Activated CD8-positive, alpha-beta T cell treated with anti-CD3 and anti-CD28 coated beads, Interleukin-2, amount 10 ng/mL, durations not matched to agents 7 days and 5 days (primary cell): ENCODE measurements at regions of chr9 and their contacts with region 1.

Region 1: DNA sequence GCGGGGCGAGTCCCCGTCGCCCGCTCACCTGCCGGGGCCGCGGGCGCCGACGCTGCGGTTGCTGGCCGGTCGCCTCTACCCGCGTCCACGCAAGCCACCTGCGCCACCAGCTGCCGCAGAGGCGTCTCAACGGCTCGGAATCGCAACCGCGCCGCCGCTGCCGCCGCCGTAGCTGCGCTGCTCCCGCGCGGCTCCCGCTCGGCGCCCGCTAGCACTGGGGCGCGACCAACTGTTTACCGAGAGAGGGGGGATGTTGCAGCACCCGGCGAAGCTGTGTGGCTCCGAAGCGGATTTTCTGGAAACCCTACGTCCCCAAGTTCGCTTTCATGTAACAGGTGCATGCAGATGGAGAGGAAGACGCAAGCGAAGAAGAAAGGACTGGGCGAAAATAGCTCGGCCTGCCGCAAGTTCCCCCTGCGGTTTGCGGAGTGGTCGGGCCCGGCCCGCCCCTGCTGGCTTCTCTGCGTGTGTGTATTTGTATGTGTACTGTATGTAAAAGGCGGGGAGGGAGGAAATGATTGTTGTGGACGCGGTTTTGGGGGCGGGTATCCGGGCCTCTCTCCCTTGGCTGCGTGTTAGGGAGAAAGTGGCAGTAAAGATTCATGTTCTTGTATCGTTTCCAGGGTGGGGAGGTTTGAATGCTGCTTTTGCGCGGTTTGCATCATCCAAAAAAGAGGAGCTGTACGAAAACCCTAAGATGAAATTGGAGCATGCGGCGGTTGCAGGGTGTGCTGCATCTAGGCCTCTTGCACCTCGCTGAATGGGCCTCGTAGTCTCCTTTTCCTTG is at the start of gene PSIP1:
- DNase-seq: peak; percentile 93
- ATAC-seq: peak; percentile 88
- H3K4me3 Mint-ChIP-seq: peak within 1 kb of the TSS; percentile 89
- H3K27ac Mint-ChIP-seq: peak within 1 kb of the TSS; percentile 100
- H3K4me1 Mint-ChIP-seq: peaks cover 51% of the 10 kb centered on the region
- H3K27me3 Mint-ChIP-seq: peaks cover 7% of the 10 kb centered on the region
- total RNA-seq, gene PSIP1: 132 to 138 TPM

Region 2: GRCh38 chr9:15333376-15333881 is 177.6 kb before region 1 on chr9:
- CTCF ChIA-PET with region 1: no interaction called
- POLR2A ChIA-PET with region 1: no interaction called
- DNase-seq: no peak
- ATAC-seq: no peak
- H3K4me3 Mint-ChIP-seq: no peak overlapping the region
- H3K27ac Mint-ChIP-seq: no peak overlapping the region
- H3K4me1 Mint-ChIP-seq: no peaks in the 10 kb centered on the region
- H3K27me3 Mint-ChIP-seq: peaks cover 3% of the 10 kb centered on the region

Region 3: DNA sequence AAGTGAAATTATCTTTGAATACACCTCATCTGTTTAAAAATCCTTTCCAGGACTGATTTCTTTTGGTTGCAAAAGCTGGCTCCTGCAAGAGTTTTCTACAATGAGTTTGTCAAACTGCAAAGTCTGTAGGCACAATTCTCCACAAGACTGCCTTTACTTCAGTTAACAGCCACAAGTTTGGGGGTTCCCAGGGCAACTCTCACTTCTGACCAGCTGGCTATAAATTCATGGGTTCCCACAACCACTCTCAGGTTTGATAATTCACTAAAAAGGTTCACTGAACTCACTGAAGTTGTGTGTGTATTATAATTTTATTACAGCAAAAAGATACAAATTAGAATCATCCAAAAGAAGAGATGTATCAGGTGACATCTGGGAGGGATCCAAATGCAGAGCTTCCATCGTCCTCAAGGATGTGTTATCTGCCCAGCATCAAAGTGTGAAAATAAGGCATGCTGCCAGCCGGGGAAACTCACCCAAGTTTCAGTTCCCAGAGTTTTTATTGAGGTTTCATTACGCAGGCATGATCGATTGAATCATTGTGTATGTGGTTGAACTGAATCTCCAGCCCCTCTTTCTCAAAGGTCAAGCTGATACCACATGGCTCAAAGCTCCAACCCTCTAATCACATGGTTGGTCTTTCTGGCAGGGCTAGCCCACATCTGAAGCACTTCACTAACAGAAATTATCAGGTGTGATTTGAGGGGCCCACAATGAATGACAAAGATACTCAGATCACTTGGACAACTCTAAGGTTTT is 18.8 kb after region 1 on chr9:
- CTCF ChIA-PET with region 1: interaction called, 11 read pairs
- POLR2A ChIA-PET with region 1: interaction called, 13 read pairs
- DNase-seq: no peak
- ATAC-seq: no peak
- H3K4me3 Mint-ChIP-seq: no peak overlapping the region
- H3K27ac Mint-ChIP-seq: no peak overlapping the region
- H3K4me1 Mint-ChIP-seq: peaks cover 9% of the 10 kb centered on the region
- H3K27me3 Mint-ChIP-seq: no peaks in the 10 kb centered on the region

Region 4: GRCh38 chr9:15999422-16000339 is 488.7 kb after region 1 on chr9:
- CTCF ChIA-PET with region 1: no interaction called
- POLR2A ChIA-PET with region 1: no interaction called
- DNase-seq: no peak
- ATAC-seq: no peak
- H3K4me3 Mint-ChIP-seq: no peak overlapping the region
- H3K27ac Mint-ChIP-seq: no peak overlapping the region
- H3K4me1 Mint-ChIP-seq: no peaks in the 10 kb centered on the region
- H3K27me3 Mint-ChIP-seq: peaks cover 4% of the 10 kb centered on the region